ENCODE measurements at regions of chr1 and their contacts with region 1.

Region 1: GRCh38 chr1:227712648-227713047 is 22.5 kb downstream of the JMJD4 start:
- DNase-seq: no peak
- ATAC-seq: no peak
- H3K4me3 ChIP-seq: no peak overlapping the region
- H3K27ac ChIP-seq: no peak overlapping the region
- H3K4me1 ChIP-seq: no peaks in the 10 kb centered on the region
- H3K27me3 ChIP-seq: no peaks in the 10 kb centered on the region
- CTCF ChIP-seq: no peak

Region 2: GRCh38 chr1:227666286-227666685 is 46.4 kb before region 1 on chr1:
- intact Hi-C with region 1: no loop called
- DNase-seq: no peak
- ATAC-seq: no peak
- H3K4me3 ChIP-seq: no peak overlapping the region
- H3K27ac ChIP-seq: no peak overlapping the region
- H3K4me1 ChIP-seq: no peaks in the 10 kb centered on the region
- H3K27me3 ChIP-seq: no peaks in the 10 kb centered on the region
- CTCF ChIP-seq: no peak

Region 3: DNA sequence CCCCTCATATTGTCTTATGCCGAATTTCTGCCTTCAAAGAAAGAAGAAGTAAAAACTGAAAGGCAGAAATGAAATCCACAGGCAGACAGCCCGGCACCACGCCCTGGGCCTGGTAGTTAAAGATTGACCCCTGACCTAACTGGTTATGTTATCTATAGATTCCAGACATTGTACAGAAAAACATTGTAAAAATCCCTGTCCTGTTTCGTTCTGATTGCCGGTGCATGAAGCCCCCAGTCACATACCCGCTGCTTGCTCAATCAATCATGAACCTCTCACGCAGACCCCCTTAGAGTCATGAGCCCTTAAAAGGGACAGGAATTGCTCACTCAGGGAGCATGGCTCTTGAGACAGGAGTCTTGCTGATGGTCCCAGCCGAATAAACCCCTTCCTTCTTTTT is 26.8 kb before region 1 on chr1:
- intact Hi-C with region 1: no loop called
- DNase-seq: no peak
- ATAC-seq: no peak
- H3K4me3 ChIP-seq: no peak overlapping the region
- H3K27ac ChIP-seq: no peak overlapping the region
- H3K4me1 ChIP-seq: no peaks in the 10 kb centered on the region
- H3K27me3 ChIP-seq: no peaks in the 10 kb centered on the region
- CTCF ChIP-seq: no peak

Region 4: DNA sequence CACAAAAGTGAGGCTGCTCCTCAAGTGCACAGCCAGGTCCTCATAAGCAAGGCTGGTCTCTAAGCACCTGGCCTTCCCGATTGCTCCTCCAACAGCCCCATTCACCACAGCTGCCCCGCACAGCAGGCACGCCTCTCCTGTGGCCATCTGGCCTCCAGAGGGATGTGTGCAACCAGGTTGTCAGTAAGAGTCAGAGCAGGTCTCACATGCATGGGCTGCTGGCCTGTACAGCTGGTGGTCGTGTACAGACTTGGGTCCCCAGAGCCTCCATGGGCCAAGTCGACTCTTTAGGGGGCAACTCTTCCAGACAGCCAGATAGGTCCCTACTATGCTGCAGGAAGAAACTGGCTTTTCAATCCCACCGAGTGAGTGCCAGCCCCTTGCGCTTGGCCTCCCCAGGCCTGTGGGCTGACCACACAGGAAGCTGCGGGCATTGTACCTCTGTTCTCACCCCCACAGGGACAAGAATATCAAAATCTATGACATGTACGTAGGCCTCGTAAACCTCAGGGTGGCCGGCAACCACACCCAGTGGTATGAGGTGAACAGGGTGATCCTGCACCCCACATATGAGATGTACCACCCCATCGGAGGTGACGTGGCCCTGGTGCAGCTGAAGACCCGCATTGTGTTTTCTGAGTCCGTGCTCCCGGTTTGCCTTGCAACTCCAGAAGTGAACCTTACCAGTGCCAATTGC is 104.2 kb after region 1 on chr1:
- intact Hi-C with region 1: loop called in 1 of 2 experiments (anchors 10 kb)
- DNase-seq: no peak
- ATAC-seq: no peak
- H3K4me3 ChIP-seq: no peak overlapping the region
- H3K27ac ChIP-seq: no peak overlapping the region
- H3K4me1 ChIP-seq: no peaks in the 10 kb centered on the region
- H3K27me3 ChIP-seq: no peaks in the 10 kb centered on the region
- CTCF ChIP-seq: no peak

Measured in psoas muscle (tissue), 8 donors.